ENCODE measurements at regions of chr7 and their contacts with region 1.

Region 1: DNA sequence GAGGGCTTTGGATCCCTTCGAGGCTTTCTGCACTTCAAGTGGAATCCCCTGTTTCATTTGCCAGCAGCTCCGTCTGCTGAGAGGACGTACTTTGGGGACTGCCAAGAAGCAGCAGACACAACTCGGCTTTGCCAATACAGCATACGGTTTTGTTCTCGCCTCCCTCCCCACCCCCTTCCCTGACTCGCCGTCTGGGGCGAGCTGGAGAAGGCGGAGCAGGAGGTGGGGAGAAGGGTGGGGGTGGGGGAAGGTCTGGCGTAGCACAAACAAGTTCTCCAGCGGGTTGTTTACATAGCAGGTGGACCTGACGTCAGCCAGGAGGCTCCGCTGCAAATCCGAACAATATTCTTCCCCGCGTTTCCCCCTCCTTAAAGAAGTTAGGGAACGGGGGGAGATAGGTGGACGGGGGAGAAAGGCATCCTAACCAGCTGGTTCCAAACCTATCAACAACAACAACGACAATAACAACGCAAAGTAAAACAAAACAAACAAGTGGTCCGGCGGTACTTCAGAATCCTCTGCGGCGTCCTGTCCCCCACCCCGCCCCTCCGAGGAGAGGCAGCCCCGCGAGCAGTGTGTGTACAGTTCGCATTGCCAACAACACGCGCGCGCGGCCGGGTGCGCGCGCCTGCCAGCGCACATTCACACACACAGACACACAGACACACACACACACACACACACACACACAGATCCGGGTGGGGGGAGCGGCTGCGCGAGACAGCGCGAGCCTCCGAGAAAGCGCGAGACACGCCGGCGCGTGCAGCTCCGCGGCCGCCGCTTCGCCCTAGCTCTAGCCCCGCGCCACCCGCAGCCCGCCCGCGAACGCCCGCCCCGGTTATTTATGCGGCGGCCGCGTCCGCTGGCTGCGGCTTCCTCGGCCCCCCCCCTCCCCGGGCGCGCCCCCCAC is 167.0 kb upstream of the PPP1R3A start:
- DNase-seq: peak; percentile 79
- H3K4me3 ChIP-seq: peak overlapping the region; percentile 50 to 63
- H3K27ac ChIP-seq: peak overlapping the region; percentile 86 to 91
- H3K4me1 ChIP-seq: no peaks in the 10 kb centered on the region
- H3K27me3 ChIP-seq: peaks cover 2% of the 10 kb centered on the region
- CTCF ChIP-seq: no peak
- POLR2A ChIP-seq: no peak

Region 2: GRCh38 chr7:114160925-114161324 is 75.1 kb after region 1 on chr7:
- intact Hi-C with region 1: no loop called
- DNase-seq: no peak
- H3K4me3 ChIP-seq: no peak overlapping the region
- H3K27ac ChIP-seq: no peak overlapping the region
- H3K4me1 ChIP-seq: no peaks in the 10 kb centered on the region
- H3K27me3 ChIP-seq: no peaks in the 10 kb centered on the region
- CTCF ChIP-seq: no peak
- POLR2A ChIP-seq: no peak

Region 3: DNA sequence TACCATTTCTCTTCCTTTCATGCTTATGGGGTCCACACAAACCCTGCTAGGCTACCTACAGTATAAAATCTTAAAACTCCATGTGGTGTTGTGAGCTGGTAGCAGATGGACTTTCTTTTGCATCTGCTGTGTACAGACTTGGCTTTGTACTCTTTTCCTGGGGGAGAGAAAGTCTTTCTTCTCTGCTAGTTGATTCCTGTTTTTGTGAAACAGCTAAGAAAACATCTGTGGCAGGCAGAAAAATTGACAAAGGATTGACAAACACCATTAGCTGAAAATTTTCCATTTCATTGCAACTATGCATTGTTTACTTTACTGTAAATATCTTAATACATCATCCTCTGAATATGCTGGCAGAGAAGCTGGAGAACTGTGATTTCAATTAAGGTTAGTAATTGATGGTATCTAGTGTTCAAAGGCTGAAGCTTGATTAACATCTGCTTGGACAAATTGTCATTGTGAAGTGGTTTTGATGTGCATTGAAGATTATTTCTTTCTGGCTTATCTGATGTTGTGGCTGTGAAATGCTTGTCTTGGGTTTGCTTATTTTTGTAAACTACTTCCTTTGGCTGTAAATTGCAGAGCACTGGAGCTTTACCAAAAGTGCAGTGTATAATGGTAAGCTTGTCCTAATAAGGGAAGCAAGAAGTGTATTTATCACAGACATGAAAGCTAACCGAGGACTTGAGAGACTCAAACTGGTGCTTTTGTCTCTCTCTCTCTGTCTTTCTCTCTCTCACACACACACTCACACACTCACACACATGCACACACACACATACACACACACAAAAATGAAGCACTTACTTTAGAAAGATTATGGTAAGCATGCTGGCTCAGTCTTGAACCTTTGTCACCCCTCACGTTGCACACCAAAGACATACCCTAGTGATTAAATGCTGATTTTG is 328.6 kb after region 1 on chr7 and contains the start of gene FOXP2:
- intact Hi-C with region 1: loop called (anchors 2 kb)
- DNase-seq: no peak
- H3K4me3 ChIP-seq: peak within 1 kb of the TSS; percentile 10 to 14
- H3K27ac ChIP-seq: peak within 1 kb of the TSS in 1 of 2 donors; percentile 45
- H3K4me1 ChIP-seq: no peaks in the 10 kb centered on the region
- H3K27me3 ChIP-seq: no peaks in the 10 kb centered on the region
- CTCF ChIP-seq: no peak
- POLR2A ChIP-seq: no peak
- total RNA-seq, gene FOXP2: 4.9 to 5.6 TPM

Region 4: GRCh38 chr7:114663502-114663901 is 577.7 kb after region 1 on chr7:
- intact Hi-C with region 1: loop called (anchors 5 kb)
- DNase-seq: no peak
- H3K4me3 ChIP-seq: no peak overlapping the region
- H3K27ac ChIP-seq: no peak overlapping the region
- H3K4me1 ChIP-seq: no peaks in the 10 kb centered on the region
- H3K27me3 ChIP-seq: no peaks in the 10 kb centered on the region
- CTCF ChIP-seq: peak in 1 of 4 experiments; percentile 12
- POLR2A ChIP-seq: no peak

Region 5: DNA sequence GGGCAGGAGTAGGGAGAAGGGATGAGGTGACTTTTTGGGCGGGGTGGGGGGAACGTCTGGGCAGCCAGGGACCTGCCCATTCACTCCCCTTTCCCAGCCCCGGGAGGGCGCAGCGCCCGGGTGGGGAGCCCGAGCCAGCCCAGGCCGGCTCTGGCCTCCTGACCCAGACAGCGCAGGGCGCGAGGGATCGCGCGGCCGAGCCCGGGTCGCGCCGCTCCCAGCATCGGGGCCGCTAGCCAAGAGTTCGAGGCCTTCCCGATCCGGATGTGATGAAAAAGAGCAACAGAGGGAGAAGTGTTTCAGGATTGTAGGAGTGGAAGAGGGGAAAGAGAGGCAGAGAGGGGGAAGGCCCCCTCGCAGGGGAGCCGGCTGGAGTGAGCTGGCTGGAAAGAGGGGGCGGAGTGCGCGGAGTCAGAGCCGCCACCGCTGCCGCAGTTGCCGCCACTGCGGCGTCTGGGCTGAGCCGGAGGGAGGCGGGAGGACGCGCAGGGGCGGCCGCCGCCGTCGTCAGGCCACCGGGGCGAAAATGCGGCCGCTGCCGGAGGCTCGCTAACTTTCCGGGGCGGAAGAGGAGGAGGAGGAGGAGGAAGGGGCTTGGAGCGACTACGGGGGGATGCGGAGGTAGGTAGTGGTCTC is 836.3 kb after region 1 on chr7 and contains the start of gene MDFIC:
- intact Hi-C with region 1: loop called (anchors 10 kb)
- DNase-seq: peak; percentile 11
- H3K4me3 ChIP-seq: peak within 1 kb of the TSS; percentile 57 to 65
- H3K27ac ChIP-seq: peak within 1 kb of the TSS; percentile 70 to 72
- H3K4me1 ChIP-seq: no peaks in the 10 kb centered on the region
- H3K27me3 ChIP-seq: no peaks in the 10 kb centered on the region
- CTCF ChIP-seq: no peak
- POLR2A ChIP-seq: no peak
- total RNA-seq, gene MDFIC: 17.2 to 24.8 TPM

Region 6: GRCh38 chr7:115356139-115356746 is 1270.4 kb after region 1 on chr7:
- intact Hi-C with region 1: loop called (anchors 10 kb)
- DNase-seq: no peak
- H3K4me3 ChIP-seq: no peak overlapping the region
- H3K27ac ChIP-seq: no peak overlapping the region
- H3K4me1 ChIP-seq: no peaks in the 10 kb centered on the region
- H3K27me3 ChIP-seq: no peaks in the 10 kb centered on the region
- CTCF ChIP-seq: peak in 2 of 4 experiments; percentile 5 to 20
- POLR2A ChIP-seq: no peak

Region 7: GRCh38 chr7:115679976-115680375 is 1594.1 kb after region 1 on chr7:
- intact Hi-C with region 1: loop called (anchors 10 kb)
- DNase-seq: no peak
- H3K4me3 ChIP-seq: no peak overlapping the region
- H3K27ac ChIP-seq: no peak overlapping the region
- H3K4me1 ChIP-seq: no peaks in the 10 kb centered on the region
- H3K27me3 ChIP-seq: no peaks in the 10 kb centered on the region
- CTCF ChIP-seq: peak in 3 of 4 experiments; percentile 14 to 31 (median 26)
- POLR2A ChIP-seq: no peak